ENCODE measurements at regions of chr3 and their contacts with region 1.

Region 1: GRCh38 chr3:107429320-107430181 is 52.3 kb downstream of the CCDC54 start:
- DNase-seq: peak; percentile 70
- H3K4me3 Mint-ChIP-seq: peak overlapping the region; percentile 74
- H3K27ac Mint-ChIP-seq: no peak overlapping the region
- H3K4me1 Mint-ChIP-seq: peaks cover 12% of the 10 kb centered on the region
- H3K27me3 Mint-ChIP-seq: peaks cover 10% of the 10 kb centered on the region

Region 2: GRCh38 chr3:107198581-107199181 is 230.9 kb before region 1 on chr3:
- CTCF ChIA-PET with region 1: no interaction called
- intact Hi-C with region 1: no loop called
- DNase-seq: no peak
- H3K4me3 Mint-ChIP-seq: no peak overlapping the region
- H3K27ac Mint-ChIP-seq: no peak overlapping the region
- H3K4me1 Mint-ChIP-seq: no peaks in the 10 kb centered on the region
- H3K27me3 Mint-ChIP-seq: peaks cover 16% of the 10 kb centered on the region

Region 3: GRCh38 chr3:107392549-107393165 is 36.9 kb before region 1 on chr3:
- CTCF ChIA-PET with region 1: no interaction called
- intact Hi-C with region 1: no loop called
- DNase-seq: no peak
- H3K4me3 Mint-ChIP-seq: no peak overlapping the region
- H3K27ac Mint-ChIP-seq: no peak overlapping the region
- H3K4me1 Mint-ChIP-seq: no peaks in the 10 kb centered on the region
- H3K27me3 Mint-ChIP-seq: peaks cover 2% of the 10 kb centered on the region

Region 4: GRCh38 chr3:107414325-107414964 is 15.1 kb before region 1 on chr3:
- CTCF ChIA-PET with region 1: interaction called, 9 read pairs
- intact Hi-C with region 1: loop called (anchors 1 kb)
- DNase-seq: peak; percentile 14
- H3K4me3 Mint-ChIP-seq: no peak overlapping the region
- H3K27ac Mint-ChIP-seq: no peak overlapping the region
- H3K4me1 Mint-ChIP-seq: peaks cover 10% of the 10 kb centered on the region
- H3K27me3 Mint-ChIP-seq: no peaks in the 10 kb centered on the region

Region 5: GRCh38 chr3:107543666-107544065 is 114.1 kb after region 1 on chr3:
- CTCF ChIA-PET with region 1: interaction called, 3 read pairs
- intact Hi-C with region 1: loop called (anchors 2 kb)
- DNase-seq: peak; percentile 13
- H3K4me3 Mint-ChIP-seq: no peak overlapping the region
- H3K27ac Mint-ChIP-seq: no peak overlapping the region
- H3K4me1 Mint-ChIP-seq: peaks cover 17% of the 10 kb centered on the region
- H3K27me3 Mint-ChIP-seq: no peaks in the 10 kb centered on the region

Region 6: GRCh38 chr3:107740992-107741896 is 311.7 kb after region 1 on chr3:
- CTCF ChIA-PET with region 1: no interaction called
- intact Hi-C with region 1: loop called (anchors 5 kb)
- DNase-seq: no peak
- H3K4me3 Mint-ChIP-seq: no peak overlapping the region
- H3K27ac Mint-ChIP-seq: no peak overlapping the region
- H3K4me1 Mint-ChIP-seq: no peaks in the 10 kb centered on the region
- H3K27me3 Mint-ChIP-seq: no peaks in the 10 kb centered on the region

Region 7: GRCh38 chr3:108835101-108835500 is 1405.5 kb after region 1 on chr3:
- CTCF ChIA-PET with region 1: no interaction called
- intact Hi-C with region 1: loop called (anchors 10 kb)
- DNase-seq: peak; percentile 66
- H3K4me3 Mint-ChIP-seq: peak overlapping the region; percentile 81
- H3K27ac Mint-ChIP-seq: peak overlapping the region; percentile 93
- H3K4me1 Mint-ChIP-seq: peaks cover 77% of the 10 kb centered on the region
- H3K27me3 Mint-ChIP-seq: no peaks in the 10 kb centered on the region

Measured in activated naive CD4-positive, alpha-beta T cell treated with anti-CD3 and anti-CD28 coated beads for 36 hours (primary cell).